ENCODE measurements at regions of chr15 and their contacts with region 1.

Region 1: GRCh38 chr15:88738796-88739195 is 64.4 kb upstream of the ACAN start:
- DNase-seq: no peak
- ATAC-seq: no peak
- H3K4me3 ChIP-seq: no peak overlapping the region
- H3K27ac ChIP-seq: no peak overlapping the region
- H3K4me1 ChIP-seq: no peaks in the 10 kb centered on the region
- H3K27me3 ChIP-seq: peaks cover 0 to 32% (median 9%) of the 10 kb centered on the region in 9 donors
- CTCF ChIP-seq: no peak
- POLR2A ChIP-seq: no peak

Region 2: GRCh38 chr15:88791637-88792036 is 52.8 kb after region 1 on chr15:
- intact Hi-C with region 1: loop called in 1 of 10 experiments (anchors 10 kb)
- DNase-seq: no peak
- ATAC-seq: no peak
- H3K4me3 ChIP-seq: no peak overlapping the region
- H3K27ac ChIP-seq: no peak overlapping the region
- H3K4me1 ChIP-seq: no peaks in the 10 kb centered on the region
- H3K27me3 ChIP-seq: peaks cover 0 to 52% (median 19%) of the 10 kb centered on the region in 9 donors
- CTCF ChIP-seq: no peak
- POLR2A ChIP-seq: no peak